Right ventricle myocardium superior (tissue), 1 donor: ENCODE measurements at regions of chr4 and their contacts with region 1.

Region 1: GRCh38 chr4:52659001-52659721 is at the start of gene USP46:
- DNase-seq: peak; percentile 89
- ATAC-seq: peak; percentile 93
- total RNA-seq, gene USP46: 55.3 TPM

Region 2: GRCh38 chr4:52588097-52588782 is 70.9 kb before region 1 on chr4:
- intact Hi-C with region 1: loop called (anchors 5 kb)
- DNase-seq: peak; percentile 49
- ATAC-seq: peak; percentile 34

Region 3: DNA sequence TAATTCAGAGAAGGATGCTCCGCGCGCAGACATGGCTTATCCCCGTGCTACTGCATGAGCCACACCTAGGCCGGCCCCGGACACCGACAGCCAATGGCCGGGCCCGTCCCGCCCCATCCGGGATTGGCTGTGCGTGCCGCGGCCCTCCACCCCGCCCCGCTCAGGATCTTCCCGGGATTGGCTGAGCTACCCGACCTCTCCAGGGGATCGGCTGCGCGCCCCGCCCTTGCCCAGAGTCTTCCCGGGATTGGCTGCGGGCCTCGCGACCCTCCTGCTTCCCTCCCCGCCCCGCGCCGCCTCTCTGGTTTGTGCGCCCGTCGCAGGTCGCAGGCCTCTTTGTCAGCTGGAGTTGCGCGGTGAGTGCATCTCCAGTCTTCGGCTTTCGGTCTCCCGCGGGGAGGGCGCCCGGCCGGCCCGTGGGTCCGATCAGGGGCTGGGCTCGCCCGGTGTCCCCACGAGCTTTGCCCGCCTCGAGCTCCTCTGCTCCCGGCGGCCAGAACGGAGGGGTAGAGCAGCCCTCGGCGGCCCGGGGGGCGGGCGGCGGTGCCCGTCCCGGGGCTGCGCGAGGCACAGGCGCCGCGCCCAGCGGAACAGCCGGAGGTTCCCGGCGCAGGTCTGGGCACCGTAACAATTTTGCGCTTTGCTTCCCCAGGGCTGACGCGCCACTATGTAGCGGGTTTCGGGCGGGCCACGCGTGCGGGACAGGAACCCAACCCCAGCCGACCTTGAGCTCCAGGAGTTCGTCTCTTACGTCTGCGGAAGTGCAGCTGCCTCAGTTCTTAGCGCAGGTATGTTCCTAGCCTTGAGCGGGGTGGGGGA is 53.2 kb after region 1 on chr4:
- intact Hi-C with region 1: loop called (anchors 5 kb)
- DNase-seq: peak; percentile 99
- ATAC-seq: peak; percentile 97

Region 4: GRCh38 chr4:52750819-52751486 is 91.8 kb after region 1 on chr4 and contains the start of gene ERVMER34-1:
- intact Hi-C with region 1: no loop called
- DNase-seq: peak; percentile 46
- ATAC-seq: peak; percentile 77
- total RNA-seq, gene ERVMER34-1: 4.5 TPM